Endothelial cell of umbilical vein (primary cell): ENCODE measurements at regions of chr9 and their contacts with region 1.

Region 1: DNA sequence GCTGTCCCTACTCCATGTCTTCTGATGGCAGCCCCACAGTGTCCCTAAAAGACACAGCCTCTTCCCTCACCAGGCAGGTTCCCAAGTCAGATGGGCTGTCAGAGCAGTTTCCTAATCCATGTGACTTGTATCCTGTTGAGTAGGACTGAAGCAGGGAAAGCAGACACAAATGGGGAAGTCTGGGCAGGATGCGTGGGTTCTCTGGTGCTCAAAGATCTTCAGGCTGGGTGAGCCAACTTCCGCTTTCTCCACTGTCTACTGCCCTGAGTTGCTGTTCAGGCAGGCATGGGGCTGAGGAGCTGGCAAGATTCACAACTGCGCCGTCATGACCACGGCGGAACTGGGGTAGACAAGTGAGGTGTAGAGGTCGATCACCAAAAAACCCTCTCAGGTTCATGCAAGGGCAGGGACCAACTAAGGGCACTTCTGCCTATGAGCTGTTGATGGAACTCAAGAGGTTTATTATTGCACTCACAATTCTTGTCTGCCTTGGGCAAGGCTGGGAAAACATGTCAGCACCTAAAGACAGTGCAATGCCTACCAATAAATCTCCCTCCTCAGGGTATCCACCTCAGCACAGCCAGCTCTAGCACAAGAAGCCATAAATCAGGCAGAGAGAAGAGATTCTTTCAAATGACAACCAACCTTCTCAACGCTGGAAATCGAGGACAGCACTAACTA is 83.4 kb downstream of the RAPGEF1 start:
- DNase-seq: peak; percentile 98
- H3K4me3 ChIP-seq: no peak overlapping the region
- H3K27ac ChIP-seq: peak overlapping the region; percentile 95
- H3K4me1 ChIP-seq: peaks cover 58% of the 10 kb centered on the region
- H3K27me3 ChIP-seq: no peaks in the 10 kb centered on the region
- CTCF ChIP-seq: no peak
- POLR2A ChIP-seq: no peak

Region 2: GRCh38 chr9:131635285-131635684 is 21.2 kb before region 1 on chr9:
- CTCF ChIA-PET with region 1: interaction called, 3 read pairs
- POLR2A ChIA-PET with region 1: no interaction called
- dilution Hi-C with region 1: no loop called
- intact Hi-C with region 1: loop called (anchors 1 kb)
- DNase-seq: peak; percentile 99
- H3K4me3 ChIP-seq: no peak overlapping the region
- H3K27ac ChIP-seq: peak overlapping the region; percentile 93
- H3K4me1 ChIP-seq: peaks cover 24% of the 10 kb centered on the region
- H3K27me3 ChIP-seq: no peaks in the 10 kb centered on the region
- CTCF ChIP-seq: peak in 1 of 2 donors; percentile 11
- POLR2A ChIP-seq: no peak

Region 3: DNA sequence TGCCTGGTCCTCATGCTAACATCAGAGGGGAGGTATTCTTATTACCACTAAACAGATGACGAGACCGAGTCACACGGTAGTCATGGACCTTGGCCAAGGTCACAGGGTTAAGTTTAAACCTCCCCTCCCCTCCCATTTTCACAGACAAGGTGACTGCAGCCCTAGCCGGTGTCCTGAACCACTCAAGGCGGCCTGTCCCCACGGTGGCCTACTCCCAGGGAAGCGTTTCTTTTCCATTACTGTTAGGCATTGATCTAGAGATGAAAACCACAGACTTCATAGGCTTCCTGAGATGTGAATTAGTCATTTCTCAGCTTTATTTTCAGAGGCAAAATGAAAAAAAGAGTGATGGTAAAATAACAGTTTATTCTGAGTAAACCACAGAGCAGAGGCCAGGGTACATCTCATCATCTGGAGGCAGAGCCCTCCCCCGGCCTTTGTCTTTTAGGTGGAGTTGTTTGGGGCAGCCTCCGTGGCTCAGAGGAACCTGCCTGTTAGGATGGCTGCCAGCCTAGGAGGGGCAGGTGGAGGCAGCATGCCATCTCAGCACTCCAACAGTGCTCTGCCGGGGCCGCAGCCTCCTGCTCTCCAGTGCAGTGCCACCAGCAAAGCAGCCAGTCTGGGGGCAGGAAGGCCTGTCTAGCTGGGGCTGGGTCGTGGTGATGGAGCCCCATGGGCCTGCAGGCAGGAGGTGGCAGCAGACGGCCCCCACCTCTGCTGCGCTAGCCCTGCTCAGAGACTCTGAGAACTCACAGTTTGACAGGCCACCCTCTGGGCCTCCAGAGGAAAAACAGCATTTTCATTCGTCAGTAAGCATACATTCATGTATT is 12.2 kb after region 1 on chr9:
- CTCF ChIA-PET with region 1: interaction called, 15 read pairs
- POLR2A ChIA-PET with region 1: no interaction called
- dilution Hi-C with region 1: no loop called
- intact Hi-C with region 1: no loop called
- DNase-seq: peak; percentile 80
- H3K4me3 ChIP-seq: no peak overlapping the region
- H3K27ac ChIP-seq: peak overlapping the region; percentile 93
- H3K4me1 ChIP-seq: peaks cover 39% of the 10 kb centered on the region
- H3K27me3 ChIP-seq: no peaks in the 10 kb centered on the region
- CTCF ChIP-seq: no peak
- POLR2A ChIP-seq: no peak

Region 4: DNA sequence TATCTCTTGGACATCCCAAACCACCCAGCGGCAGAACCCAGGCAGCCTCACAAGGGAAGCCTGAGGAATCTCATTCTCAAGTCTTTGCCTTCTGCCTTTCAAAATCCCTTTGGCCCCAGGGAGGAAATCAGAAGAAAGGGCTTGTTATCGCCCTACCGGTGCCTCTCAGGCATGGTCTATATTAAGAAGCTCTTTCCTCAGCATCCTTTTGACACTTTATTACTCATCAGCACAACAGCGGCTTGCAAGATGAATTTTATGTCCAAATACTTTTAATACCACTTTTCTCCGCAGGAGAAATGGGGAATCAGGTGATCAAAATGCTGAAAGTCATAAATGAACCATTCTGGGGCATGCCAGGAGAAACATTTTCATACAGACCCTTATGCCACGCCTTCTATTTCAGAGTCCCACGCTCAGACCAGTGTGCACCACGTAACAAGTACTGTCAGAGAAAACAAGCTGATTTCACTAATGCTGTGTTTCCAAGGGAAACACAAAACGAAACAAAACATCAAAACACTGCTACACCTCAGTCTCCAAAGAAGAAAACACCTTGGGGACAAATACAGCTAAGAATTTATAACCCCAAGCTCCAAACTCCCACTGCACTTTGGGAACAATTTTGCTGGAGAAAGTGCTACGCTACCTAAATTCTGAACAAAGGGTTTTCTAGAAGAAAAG is 53.4 kb after region 1 on chr9:
- CTCF ChIA-PET with region 1: interaction called, 5 read pairs
- POLR2A ChIA-PET with region 1: interaction called, 5 read pairs
- dilution Hi-C with region 1: no loop called
- intact Hi-C with region 1: loop called (anchors 1 kb)
- DNase-seq: peak; percentile 83
- H3K4me3 ChIP-seq: no peak overlapping the region
- H3K27ac ChIP-seq: peak overlapping the region; percentile 79
- H3K4me1 ChIP-seq: peaks cover 55% of the 10 kb centered on the region
- H3K27me3 ChIP-seq: no peaks in the 10 kb centered on the region
- CTCF ChIP-seq: no peak
- POLR2A ChIP-seq: no peak

Region 5: GRCh38 chr9:131733541-131734061 is 77.1 kb after region 1 on chr9:
- CTCF ChIA-PET with region 1: interaction called, 5 read pairs
- POLR2A ChIA-PET with region 1: no interaction called
- dilution Hi-C with region 1: no loop called
- intact Hi-C with region 1: loop called (anchors 1 kb)
- DNase-seq: peak; percentile 97
- H3K4me3 ChIP-seq: no peak overlapping the region
- H3K27ac ChIP-seq: peak overlapping the region; percentile 87
- H3K4me1 ChIP-seq: peaks cover 81% of the 10 kb centered on the region
- H3K27me3 ChIP-seq: no peaks in the 10 kb centered on the region
- CTCF ChIP-seq: no peak
- POLR2A ChIP-seq: no peak

Region 6: GRCh38 chr9:131739980-131740648 is 83.6 kb after region 1 on chr9 and contains the start of gene RAPGEF1:
- CTCF ChIA-PET with region 1: interaction called, 6 read pairs
- POLR2A ChIA-PET with region 1: no interaction called
- dilution Hi-C with region 1: no loop called
- intact Hi-C with region 1: loop called (anchors 1 kb)
- DNase-seq: no peak
- H3K4me3 ChIP-seq: peak within 1 kb of the TSS; percentile 36 to 84 (median 75)
- H3K27ac ChIP-seq: peak within 1 kb of the TSS; percentile 73
- H3K4me1 ChIP-seq: peaks cover 32% of the 10 kb centered on the region
- H3K27me3 ChIP-seq: no peaks in the 10 kb centered on the region
- CTCF ChIP-seq: peak; percentile 75 to 77
- POLR2A ChIP-seq: no peak
- total RNA-seq, gene RAPGEF1: 124 TPM in 2 replicates